BJ (cell line): ENCODE measurements at regions of chr9 and their contacts with region 1.

Region 1: GRCh38 chr9:71604197-71605063 is 163.9 kb downstream of the CEMIP2 start:
- DNase-seq: no peak
- H3K4me3 ChIP-seq: no peak overlapping the region
- H3K27me3 ChIP-seq: no peaks in the 10 kb centered on the region
- CTCF ChIP-seq: peak; percentile 82

Region 2: GRCh38 chr9:70525519-70525918 is 1078.9 kb before region 1 on chr9:
- CTCF ChIA-PET with region 1: no interaction called
- POLR2A ChIA-PET with region 1: no interaction called
- DNase-seq: no peak
- H3K4me3 ChIP-seq: no peak overlapping the region
- H3K27me3 ChIP-seq: no peaks in the 10 kb centered on the region
- CTCF ChIP-seq: no peak

Region 3: DNA sequence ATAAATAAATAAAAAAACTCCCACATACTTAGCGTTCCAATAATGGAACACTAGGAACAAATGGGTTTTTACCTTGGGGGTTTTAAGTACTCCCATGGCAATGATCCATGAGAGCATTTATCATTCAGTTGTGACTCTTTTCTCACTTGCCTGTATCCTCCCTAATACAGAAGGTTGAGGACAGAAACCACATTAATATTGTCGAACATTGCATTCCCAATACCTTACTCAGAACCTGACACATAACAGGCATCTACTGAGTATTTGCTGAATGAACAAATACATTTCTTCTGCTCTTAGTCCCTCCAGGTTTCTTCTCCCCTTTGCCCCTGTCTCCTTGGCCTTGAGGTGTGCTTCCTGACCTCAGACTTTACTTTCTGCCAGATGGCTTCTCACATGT is 12.0 kb before region 1 on chr9:
- CTCF ChIA-PET with region 1: interaction called, 17 read pairs
- POLR2A ChIA-PET with region 1: no interaction called
- DNase-seq: no peak
- H3K4me3 ChIP-seq: no peak overlapping the region
- H3K27me3 ChIP-seq: peaks cover 2% of the 10 kb centered on the region
- CTCF ChIP-seq: no peak

Region 4: GRCh38 chr9:71614409-71615010 is 10.1 kb after region 1 on chr9:
- CTCF ChIA-PET with region 1: interaction called, 12 read pairs
- POLR2A ChIA-PET with region 1: no interaction called
- DNase-seq: no peak
- H3K4me3 ChIP-seq: no peak overlapping the region
- H3K27me3 ChIP-seq: no peaks in the 10 kb centered on the region
- CTCF ChIP-seq: no peak

Region 5: DNA sequence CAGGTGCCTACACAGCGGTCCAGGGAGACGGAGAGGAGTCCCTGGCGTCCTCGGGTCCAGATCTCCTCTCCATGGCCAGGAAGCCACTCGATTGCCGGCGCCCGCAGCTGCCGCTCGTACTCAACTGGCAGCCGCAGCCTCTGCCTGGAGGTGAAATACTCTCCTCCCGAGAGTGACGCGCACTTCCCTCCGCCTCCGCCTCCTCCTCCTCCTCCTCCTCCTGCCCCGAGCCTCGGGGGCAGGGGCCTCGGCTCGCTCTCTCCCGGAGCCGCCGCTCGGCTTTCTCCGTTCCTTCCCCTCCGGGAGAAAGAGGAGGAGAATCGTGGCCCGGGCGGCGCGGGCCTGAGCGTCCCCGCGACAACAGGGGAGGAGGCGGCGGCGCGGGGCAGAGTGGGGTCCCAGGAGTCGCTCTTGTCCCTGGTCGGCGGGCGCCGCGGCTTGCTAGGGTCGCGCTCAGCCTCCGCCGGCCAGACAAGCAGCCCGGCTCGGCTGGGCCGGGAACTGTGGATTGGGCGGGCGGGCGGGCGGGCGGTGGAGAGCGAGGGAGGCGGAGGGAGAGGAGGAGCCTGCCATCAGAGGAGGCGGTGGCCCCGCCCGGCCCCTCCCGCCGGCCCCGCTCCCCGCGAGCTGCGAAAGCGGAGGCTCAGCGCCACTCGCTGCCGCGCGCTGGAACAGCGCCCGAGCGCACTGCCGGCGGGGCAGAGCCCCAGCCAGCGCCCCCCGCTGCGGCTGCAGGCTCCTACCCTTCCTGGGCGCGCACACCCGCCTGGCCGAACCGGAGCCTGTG is 164.2 kb after region 1 on chr9 and contains the start of gene CEMIP2:
- CTCF ChIA-PET with region 1: interaction called, 25 read pairs
- POLR2A ChIA-PET with region 1: no interaction called
- DNase-seq: peak; percentile 36
- H3K4me3 ChIP-seq: peak within 1 kb of the TSS; percentile 68
- H3K27me3 ChIP-seq: no peaks in the 10 kb centered on the region
- CTCF ChIP-seq: 0 out of 2 replicates have a peak, but pooled peaks have one; percentile 5
- polyA plus RNA-seq, gene CEMIP2: 117 and 120 TPM in 2 replicates